ENCODE measurements at regions of chrX and their contacts with region 1.

Region 1: GRCh38 chrX:68710870-68711576 is 63.6 kb downstream of the STARD8 start:
- DNase-seq: peak in 1 of 2 experiments; percentile 56
- H3K4me3 ChIP-seq: no peak overlapping the region
- H3K27ac ChIP-seq: no peak overlapping the region
- H3K4me1 ChIP-seq: peaks cover 0 to 7% (median 3%) of the 10 kb centered on the region in 4 experiments; a peak in 4 of 7 replicates
- H3K27me3 ChIP-seq: no peaks in the 10 kb centered on the region
- CTCF ChIP-seq: peak; percentile 70 to 76 (median 76)
- EP300 ChIP-seq: no peak
- POLR2A ChIP-seq: no peak
- RAD21 ChIP-seq: peak; percentile 90 to 95

Region 2: DNA sequence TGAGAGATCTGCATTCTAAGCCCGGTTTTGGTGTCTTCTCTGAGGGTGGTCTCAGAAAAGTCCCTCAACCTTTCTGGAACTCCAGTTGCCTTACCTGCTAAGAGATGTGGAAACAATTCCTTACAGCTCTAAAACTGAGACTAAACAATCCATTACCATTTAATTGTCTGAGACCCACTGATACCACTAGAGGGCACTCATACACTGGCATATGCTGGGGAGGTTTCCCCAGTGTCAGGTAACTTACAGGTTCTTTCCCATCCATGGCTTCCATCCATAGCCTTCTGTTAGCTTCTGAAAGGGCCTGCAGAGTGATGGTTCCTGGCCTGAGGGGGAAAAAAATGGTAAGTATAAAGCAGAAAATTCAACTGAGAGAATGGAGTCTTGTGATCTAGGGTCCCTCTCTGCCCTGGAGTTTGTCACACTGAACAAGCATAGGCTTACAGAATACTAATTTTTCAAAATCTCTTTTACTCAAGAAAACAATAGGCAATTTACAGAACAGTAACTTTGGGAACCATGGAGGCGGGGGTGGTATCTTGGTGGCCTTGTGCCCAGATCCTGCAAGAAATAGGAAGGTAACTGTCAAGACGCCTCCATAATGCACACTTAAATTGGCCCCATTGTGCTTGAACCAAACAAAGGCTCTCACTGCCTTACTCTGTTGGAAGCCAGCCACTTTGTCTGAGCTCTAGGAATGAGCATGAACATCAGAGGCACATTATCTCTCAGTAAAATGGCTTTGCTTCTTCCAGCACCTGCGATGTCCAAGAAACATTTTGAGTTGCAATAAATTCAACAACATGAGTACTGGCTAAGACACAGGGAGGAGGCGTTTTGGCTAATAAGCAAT is 513.9 kb before region 1 on chrX:
- CTCF ChIA-PET with region 1: interaction called, 14 read pairs
- POLR2A ChIA-PET with region 1: no interaction called
- DNase-seq: peak in 1 of 2 experiments; percentile 33
- H3K4me3 ChIP-seq: no peak overlapping the region
- H3K27ac ChIP-seq: no peak overlapping the region
- H3K4me1 ChIP-seq: peaks cover 0 to 3% (median 0%) of the 10 kb centered on the region in 4 experiments; a peak in 2 of 7 replicates
- H3K27me3 ChIP-seq: no peaks in the 10 kb centered on the region
- CTCF ChIP-seq: peak in 2 of 3 experiments; percentile 66; a peak in 3 of 4 replicates
- EP300 ChIP-seq: no peak
- POLR2A ChIP-seq: no peak
- RAD21 ChIP-seq: peak; percentile 92

Region 3: GRCh38 chrX:68511255-68511654 is 199.8 kb before region 1 on chrX:
- CTCF ChIA-PET with region 1: interaction called, 55 read pairs
- POLR2A ChIA-PET with region 1: interaction called, 5 read pairs
- DNase-seq: no peak
- H3K4me3 ChIP-seq: no peak overlapping the region
- H3K27ac ChIP-seq: no peak overlapping the region
- H3K4me1 ChIP-seq: no peaks in the 10 kb centered on the region
- H3K27me3 ChIP-seq: no peaks in the 10 kb centered on the region
- CTCF ChIP-seq: peak in 2 of 3 experiments; percentile 56 to 65; a peak in 3 of 4 replicates
- EP300 ChIP-seq: no peak
- POLR2A ChIP-seq: no peak
- RAD21 ChIP-seq: peak; percentile 74 to 79

Region 4: DNA sequence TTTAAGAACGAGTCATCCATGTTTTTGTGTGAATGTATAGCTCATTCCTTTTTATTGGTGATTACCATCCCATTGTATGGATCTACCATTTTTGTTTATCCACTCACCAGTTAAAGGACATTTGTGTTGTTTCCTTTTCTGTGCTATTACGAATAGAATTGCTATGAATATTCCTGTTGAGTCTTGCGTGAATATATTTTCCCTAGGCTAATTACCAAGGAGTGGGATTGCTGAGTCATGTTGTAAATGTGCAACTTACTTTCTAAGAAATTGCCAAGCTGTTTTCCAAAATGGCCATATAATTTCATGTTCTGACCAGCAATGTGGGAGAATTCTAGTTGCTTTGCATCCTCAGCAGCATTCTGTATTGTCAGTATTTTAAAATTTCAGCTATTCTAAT is 160.8 kb before region 1 on chrX:
- CTCF ChIA-PET with region 1: interaction called, 10 read pairs
- POLR2A ChIA-PET with region 1: no interaction called
- DNase-seq: no peak
- H3K4me3 ChIP-seq: no peak overlapping the region
- H3K27ac ChIP-seq: no peak overlapping the region
- H3K4me1 ChIP-seq: no peaks in the 10 kb centered on the region
- H3K27me3 ChIP-seq: no peaks in the 10 kb centered on the region
- CTCF ChIP-seq: no peak
- EP300 ChIP-seq: no peak
- POLR2A ChIP-seq: no peak
- RAD21 ChIP-seq: no peak

Region 5: DNA sequence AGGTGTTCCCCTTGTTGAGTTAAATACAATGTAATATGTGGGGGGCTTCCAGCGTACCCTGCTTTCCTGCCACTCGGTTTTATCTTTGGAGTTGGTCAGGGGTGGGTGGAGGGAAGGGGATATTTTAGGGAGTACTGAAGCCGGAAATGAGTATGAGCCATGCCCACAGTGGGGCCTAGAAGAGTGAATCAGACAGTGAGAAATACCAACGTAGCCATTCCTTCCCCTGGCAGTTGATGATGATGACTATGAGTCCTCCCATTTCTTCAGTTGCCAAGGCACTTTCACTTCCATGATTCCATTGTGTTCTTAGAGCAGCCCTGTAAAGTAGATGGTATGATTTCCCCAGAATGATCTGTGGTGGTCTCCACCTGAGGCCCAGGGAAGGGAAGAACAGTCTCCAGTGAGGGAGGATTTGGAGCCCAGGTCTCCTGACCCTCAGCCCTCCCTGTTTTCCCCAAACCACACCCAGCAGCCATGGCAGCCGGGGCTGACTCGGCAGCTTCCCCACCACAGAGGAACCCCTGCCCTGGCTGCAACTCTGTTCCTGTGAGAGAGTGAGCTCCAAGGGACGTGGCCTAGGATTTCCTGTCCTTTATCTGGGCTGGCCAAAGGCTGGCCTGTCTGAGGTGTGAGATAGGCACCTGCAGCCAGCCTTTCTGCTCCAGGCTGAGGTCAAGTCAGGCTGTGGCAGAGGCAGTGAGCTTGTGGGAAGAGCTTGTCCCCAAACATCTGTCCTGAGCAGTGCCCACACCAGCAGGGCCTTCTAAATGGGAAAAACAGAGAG is 10.9 kb before region 1 on chrX:
- CTCF ChIA-PET with region 1: interaction called, 12 read pairs
- POLR2A ChIA-PET with region 1: interaction called, 3 read pairs
- DNase-seq: no peak
- H3K4me3 ChIP-seq: no peak overlapping the region
- H3K27ac ChIP-seq: no peak overlapping the region
- H3K4me1 ChIP-seq: peaks cover 0 to 6% (median 3%) of the 10 kb centered on the region in 4 experiments; a peak in 5 of 7 replicates
- H3K27me3 ChIP-seq: no peaks in the 10 kb centered on the region
- CTCF ChIP-seq: no peak
- EP300 ChIP-seq: no peak
- POLR2A ChIP-seq: no peak
- RAD21 ChIP-seq: no peak

Measured in H1 (cell line).